CD4-positive, alpha-beta memory T cell (primary cell): ENCODE measurements at regions of chr19 and their contacts with region 1.

Region 1: GRCh38 chr19:2050991-2051772 is at the start of gene MKNK2:
- DNase-seq: peak; percentile 86 to 97 (median 93)
- H3K4me3 ChIP-seq: peak within 1 kb of the TSS; percentile 84 to 89
- H3K4me3 Mint-ChIP-seq: peak within 1 kb of the TSS; percentile 88 to 91 (median 88)
- H3K27ac ChIP-seq: peak within 1 kb of the TSS; percentile 89
- H3K27ac Mint-ChIP-seq: peak within 1 kb of the TSS; percentile 95 to 98 (median 96)
- H3K4me1 ChIP-seq: peaks cover 61% of the 10 kb centered on the region
- H3K4me1 Mint-ChIP-seq: peaks cover 15 to 68% (median 42%) of the 10 kb centered on the region in 4 donors
- H3K27me3 ChIP-seq: no peaks in the 10 kb centered on the region
- H3K27me3 Mint-ChIP-seq: no peaks in the 10 kb centered on the region
- total RNA-seq, gene MKNK2: 194 to 195 TPM

Region 2: GRCh38 chr19:1863726-1864480 is 187.3 kb before region 1 on chr19:
- CTCF ChIA-PET with region 1: no interaction called
- POLR2A ChIA-PET with region 1: no interaction called
- intact Hi-C with region 1: loop called (anchors 5 kb)
- DNase-seq: peak; percentile 92 to 94 (median 94)
- H3K4me3 ChIP-seq: peak overlapping the region; percentile 23 to 76
- H3K4me3 Mint-ChIP-seq: peak overlapping the region; percentile 58 to 83 (median 74)
- H3K27ac ChIP-seq: peak overlapping the region; percentile 74
- H3K27ac Mint-ChIP-seq: peak overlapping the region in 5 of 7 donors; percentile 52 to 91 (median 88)
- H3K4me1 ChIP-seq: peaks cover 38% of the 10 kb centered on the region
- H3K4me1 Mint-ChIP-seq: peaks cover 8 to 41% (median 25%) of the 10 kb centered on the region in 4 donors
- H3K27me3 ChIP-seq: no peaks in the 10 kb centered on the region
- H3K27me3 Mint-ChIP-seq: no peaks in the 10 kb centered on the region

Region 3: DNA sequence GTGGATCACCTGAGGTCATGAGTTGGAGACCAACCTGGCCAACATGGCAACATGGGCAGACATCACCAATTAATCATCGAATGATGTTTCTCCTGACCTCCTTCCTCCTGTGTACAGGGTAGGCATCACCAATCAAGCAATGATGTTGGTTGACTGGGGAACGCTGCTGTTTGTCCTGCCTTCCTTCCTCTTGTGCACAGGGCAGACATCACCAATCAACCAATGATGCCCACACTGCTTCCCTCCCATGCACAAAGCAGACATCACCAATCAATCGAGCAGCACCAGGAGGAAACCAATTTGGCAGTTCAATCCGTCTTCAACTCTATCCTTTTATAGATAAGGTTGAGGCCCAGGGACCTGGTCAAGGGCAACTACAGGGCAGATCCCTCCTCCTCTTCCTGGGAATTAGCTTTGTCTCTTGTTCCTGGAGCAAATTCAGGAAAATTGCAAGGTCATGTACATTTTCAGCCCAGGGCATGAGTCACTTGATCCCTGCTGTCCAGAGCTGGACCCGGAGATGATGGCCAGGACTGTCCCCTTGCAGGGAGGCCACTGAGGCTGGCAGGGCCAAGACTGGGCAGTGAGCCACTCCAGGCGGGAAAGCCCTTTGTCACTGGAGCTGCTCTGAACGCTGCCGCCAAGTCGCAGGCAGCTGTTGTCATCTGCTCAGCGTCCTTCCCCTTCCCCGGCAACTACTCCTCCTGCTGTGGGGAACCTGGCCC is 115.5 kb before region 1 on chr19:
- CTCF ChIA-PET with region 1: no interaction called
- POLR2A ChIA-PET with region 1: no interaction called
- intact Hi-C with region 1: no loop called
- DNase-seq: no peak
- H3K4me3 ChIP-seq: no peak overlapping the region
- H3K4me3 Mint-ChIP-seq: no peak overlapping the region
- H3K27ac ChIP-seq: no peak overlapping the region
- H3K27ac Mint-ChIP-seq: peak overlapping the region; percentile 14 to 85 (median 73)
- H3K4me1 ChIP-seq: peaks cover 11% of the 10 kb centered on the region
- H3K4me1 Mint-ChIP-seq: peaks cover 12 to 38% (median 22%) of the 10 kb centered on the region in 4 donors
- H3K27me3 ChIP-seq: no peaks in the 10 kb centered on the region
- H3K27me3 Mint-ChIP-seq: peaks cover 0 to 2% of the 10 kb centered on the region in 2 donors

Region 4: DNA sequence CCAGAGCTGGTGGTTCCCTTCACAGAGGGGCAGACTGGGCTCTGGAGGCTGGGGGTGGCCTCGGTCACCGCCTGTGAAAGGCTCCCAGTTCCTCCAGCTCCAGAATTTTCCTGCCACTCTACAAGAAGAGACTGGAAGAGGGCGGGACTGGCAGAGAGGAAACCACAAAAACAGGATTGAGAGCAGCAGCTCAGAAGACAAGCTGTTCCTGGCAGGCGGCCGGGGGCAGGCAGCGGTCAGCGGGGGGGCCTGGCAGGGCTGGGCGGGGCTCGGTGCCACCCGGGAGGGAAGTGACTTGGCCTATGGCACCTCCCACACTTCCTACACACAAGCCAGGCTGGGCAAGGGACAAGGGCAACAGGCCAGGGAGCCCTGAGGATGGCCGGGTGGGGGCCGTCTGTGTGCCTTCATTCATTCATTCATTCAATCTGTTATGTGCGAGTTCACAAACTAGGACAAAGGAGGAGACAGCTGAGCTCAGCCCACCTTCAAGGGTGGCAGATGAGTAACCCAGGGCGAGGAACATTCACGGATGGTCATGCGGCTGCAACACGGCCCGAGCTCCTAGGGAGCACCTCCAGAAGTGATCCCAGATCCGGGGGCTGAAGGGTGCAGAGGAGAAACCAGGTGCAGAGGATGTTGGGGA is 18.8 kb before region 1 on chr19:
- CTCF ChIA-PET with region 1: no interaction called
- POLR2A ChIA-PET with region 1: interaction called, 124 read pairs
- intact Hi-C with region 1: no loop called
- DNase-seq: peak in 4 of 5 donors; percentile 35 to 65 (median 40)
- H3K4me3 ChIP-seq: no peak overlapping the region
- H3K4me3 Mint-ChIP-seq: peak overlapping the region; percentile 50 to 84 (median 68)
- H3K27ac ChIP-seq: peak overlapping the region; percentile 59
- H3K27ac Mint-ChIP-seq: peak overlapping the region; percentile 76 to 96 (median 92)
- H3K4me1 ChIP-seq: peaks cover 35% of the 10 kb centered on the region
- H3K4me1 Mint-ChIP-seq: peaks cover 16 to 36% (median 25%) of the 10 kb centered on the region in 4 donors
- H3K27me3 ChIP-seq: no peaks in the 10 kb centered on the region
- H3K27me3 Mint-ChIP-seq: no peaks in the 10 kb centered on the region

Region 5: DNA sequence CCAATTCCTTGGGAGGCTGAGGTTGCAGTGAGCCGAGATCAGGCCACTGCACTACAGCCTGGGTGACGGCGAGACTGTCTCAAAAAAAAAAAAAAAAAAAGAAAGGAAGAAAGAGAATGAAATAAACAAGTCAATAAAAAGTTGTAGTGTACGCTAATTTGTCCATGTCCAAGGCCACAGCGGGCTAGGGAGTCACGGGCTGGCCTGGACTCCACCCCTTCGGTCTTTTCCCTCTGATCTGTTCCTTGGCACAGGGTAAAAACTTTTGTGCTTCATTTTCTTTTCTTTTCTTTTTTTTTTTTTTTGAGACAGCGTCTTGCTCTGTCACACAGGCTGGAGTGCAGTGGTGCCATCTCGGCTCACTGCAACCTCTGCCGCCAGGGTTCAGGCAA is 19.2 kb after region 1 on chr19:
- CTCF ChIA-PET with region 1: interaction called, 5 read pairs
- POLR2A ChIA-PET with region 1: interaction called, 11 read pairs
- intact Hi-C with region 1: no loop called
- DNase-seq: no peak
- H3K4me3 ChIP-seq: no peak overlapping the region
- H3K4me3 Mint-ChIP-seq: no peak overlapping the region
- H3K27ac ChIP-seq: no peak overlapping the region
- H3K27ac Mint-ChIP-seq: peak overlapping the region in 2 of 7 donors; percentile 29 to 80
- H3K4me1 ChIP-seq: peaks cover 21% of the 10 kb centered on the region
- H3K4me1 Mint-ChIP-seq: peaks cover 5 to 25% (median 13%) of the 10 kb centered on the region in 4 donors
- H3K27me3 ChIP-seq: no peaks in the 10 kb centered on the region
- H3K27me3 Mint-ChIP-seq: no peaks in the 10 kb centered on the region

Region 6: DNA sequence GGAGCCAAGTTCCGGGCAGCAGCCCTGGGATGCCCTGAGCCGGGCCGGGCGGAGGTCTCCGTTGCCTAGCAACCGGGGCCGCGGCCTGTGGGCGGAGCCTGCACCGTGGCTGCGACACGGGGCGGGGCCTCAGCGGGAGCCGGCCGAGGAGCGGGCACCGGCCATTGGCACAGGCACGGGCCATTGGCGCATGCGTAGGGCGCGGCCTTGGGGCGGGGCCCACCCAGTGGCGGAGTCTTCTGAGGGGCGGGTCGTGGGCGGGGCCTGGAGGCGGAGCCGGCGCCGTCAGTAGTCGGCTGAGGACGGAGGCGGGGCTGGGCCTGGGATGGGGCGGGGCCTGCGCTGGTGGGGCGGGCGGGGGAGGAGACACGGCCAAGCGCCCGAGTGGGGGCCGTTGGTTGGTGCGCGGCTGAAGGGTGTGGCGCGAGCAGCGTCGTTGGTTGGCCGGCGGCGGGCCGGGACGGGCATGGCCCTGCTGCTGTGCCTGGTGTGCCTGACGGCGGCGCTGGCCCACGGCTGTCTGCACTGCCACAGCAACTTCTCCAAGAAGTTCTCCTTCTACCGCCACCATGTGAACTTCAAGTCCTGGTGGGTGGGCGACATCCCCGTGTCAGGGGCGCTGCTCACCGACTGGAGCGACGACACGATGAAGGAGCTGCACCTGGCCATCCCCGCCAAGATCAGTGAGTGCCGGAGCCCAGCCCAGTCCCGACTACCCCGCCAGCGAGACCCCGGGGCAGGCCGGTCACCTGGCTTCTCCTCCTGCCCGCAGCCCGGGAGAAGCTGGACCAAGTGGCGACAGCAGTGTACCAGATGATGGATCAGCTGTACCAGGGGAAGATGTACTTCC is 45.5 kb after region 1 on chr19 and contains the start of gene IZUMO4:
- CTCF ChIA-PET with region 1: interaction called, 7 read pairs
- POLR2A ChIA-PET with region 1: interaction called, 24 read pairs
- intact Hi-C with region 1: loop called (anchors 1 kb)
- DNase-seq: peak; percentile 98 to 100 (median 99)
- H3K4me3 ChIP-seq: peak within 1 kb of the TSS; percentile 49 to 85
- H3K4me3 Mint-ChIP-seq: peak within 1 kb of the TSS; percentile 91 to 97 (median 96)
- H3K27ac ChIP-seq: peak within 1 kb of the TSS; percentile 81
- H3K27ac Mint-ChIP-seq: peak within 1 kb of the TSS; percentile 95 to 99 (median 96)
- H3K4me1 ChIP-seq: peaks cover 38% of the 10 kb centered on the region
- H3K4me1 Mint-ChIP-seq: peaks cover 12 to 44% (median 28%) of the 10 kb centered on the region in 4 donors
- H3K27me3 ChIP-seq: no peaks in the 10 kb centered on the region
- H3K27me3 Mint-ChIP-seq: no peaks in the 10 kb centered on the region
- total RNA-seq, gene IZUMO4: 18.6 to 22.1 TPM

Region 7: DNA sequence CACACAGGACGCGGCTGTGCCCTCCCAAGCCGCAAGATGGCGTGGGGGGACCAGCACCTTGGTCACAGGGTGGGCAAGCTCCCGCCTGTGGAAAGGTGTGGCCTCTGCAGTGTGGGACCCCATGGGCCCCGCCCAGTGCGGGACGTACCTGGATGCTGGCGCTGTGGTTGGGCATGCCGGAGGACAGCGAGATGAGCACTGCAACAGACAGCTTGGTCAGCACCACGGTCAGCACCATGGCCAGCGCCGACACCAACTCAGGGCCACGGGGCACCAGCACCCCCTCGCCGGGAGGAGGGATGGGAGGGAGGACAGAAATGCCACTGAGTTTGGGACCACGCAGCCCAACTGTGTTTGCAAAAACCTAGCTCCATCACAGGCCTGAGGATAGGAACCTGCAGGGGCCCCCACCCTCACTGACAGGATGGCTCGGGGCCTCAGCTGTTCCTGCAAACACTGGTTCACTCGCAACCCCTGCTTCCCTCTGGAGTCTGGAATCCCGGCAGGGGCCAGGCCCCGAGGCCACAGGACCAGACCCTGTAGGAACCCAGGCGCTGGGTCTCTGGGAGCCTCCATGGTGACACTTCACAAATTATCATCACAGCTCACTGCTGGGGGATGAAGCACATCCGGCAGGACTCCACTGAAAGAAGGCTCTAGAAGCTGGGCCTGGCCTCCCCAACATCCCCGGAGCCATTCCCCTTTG is 72.7 kb after region 1 on chr19:
- CTCF ChIA-PET with region 1: no interaction called
- POLR2A ChIA-PET with region 1: no interaction called
- intact Hi-C with region 1: no loop called
- DNase-seq: no peak
- H3K4me3 ChIP-seq: no peak overlapping the region
- H3K4me3 Mint-ChIP-seq: no peak overlapping the region
- H3K27ac ChIP-seq: no peak overlapping the region
- H3K27ac Mint-ChIP-seq: no peak overlapping the region
- H3K4me1 ChIP-seq: no peaks in the 10 kb centered on the region
- H3K4me1 Mint-ChIP-seq: peaks cover 0 to under 1% (median 0%) of the 10 kb centered on the region in 4 donors
- H3K27me3 ChIP-seq: no peaks in the 10 kb centered on the region
- H3K27me3 Mint-ChIP-seq: no peaks in the 10 kb centered on the region